ENCODE measurements at regions of chr5 and their contacts with region 1.

Region 1: DNA sequence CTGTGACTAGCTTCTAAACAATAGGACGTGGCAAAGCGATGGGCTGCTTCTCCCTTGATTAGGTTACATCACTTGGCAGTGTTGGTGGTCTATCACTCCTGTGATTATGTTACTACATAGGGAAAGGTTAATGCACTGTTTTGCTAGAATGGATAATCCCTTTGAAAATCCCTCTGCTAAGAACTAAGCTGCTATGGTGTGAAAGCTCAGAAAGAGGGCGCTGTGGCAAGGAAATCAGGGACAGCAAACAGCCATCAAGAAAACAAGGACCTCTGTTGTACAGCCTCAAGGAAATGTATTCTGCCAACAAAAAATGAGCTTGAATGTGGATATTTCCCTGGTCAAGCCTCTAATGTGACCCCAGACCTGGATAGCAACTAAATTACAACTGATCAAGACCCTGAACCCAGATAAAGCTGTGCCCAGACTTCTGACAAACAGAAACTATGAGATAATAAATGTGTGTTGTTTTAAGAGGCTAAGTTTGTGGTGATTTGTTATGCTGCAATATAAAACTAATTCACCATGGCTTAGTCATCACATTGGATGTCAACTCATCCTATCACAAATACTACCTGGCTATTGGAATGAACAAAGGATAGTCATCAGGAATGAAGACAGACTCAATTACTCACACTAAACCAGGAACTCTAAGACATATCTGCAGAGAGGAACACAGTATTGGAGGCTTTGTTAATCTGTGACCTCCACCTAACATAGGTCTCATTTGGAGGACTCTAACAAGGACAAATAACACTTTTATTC is 1215.9 kb downstream of the EFNA5 start:
- DNase-seq: no peak
- ATAC-seq: peak; percentile 74
- H3K4me3 ChIP-seq: no peak overlapping the region
- H3K27ac ChIP-seq: no peak overlapping the region
- H3K4me1 ChIP-seq: no peaks in the 10 kb centered on the region
- H3K27me3 ChIP-seq: no peaks in the 10 kb centered on the region
- CTCF ChIP-seq: peak in 2 of 3 experiments; percentile 33 to 47; a peak in 1 of 6 replicates
- EP300 ChIP-seq: no peak
- POLR2A ChIP-seq: no peak
- RAD21 ChIP-seq: peak; percentile 25; the same call in 1 of the 2 replicates

Region 2: DNA sequence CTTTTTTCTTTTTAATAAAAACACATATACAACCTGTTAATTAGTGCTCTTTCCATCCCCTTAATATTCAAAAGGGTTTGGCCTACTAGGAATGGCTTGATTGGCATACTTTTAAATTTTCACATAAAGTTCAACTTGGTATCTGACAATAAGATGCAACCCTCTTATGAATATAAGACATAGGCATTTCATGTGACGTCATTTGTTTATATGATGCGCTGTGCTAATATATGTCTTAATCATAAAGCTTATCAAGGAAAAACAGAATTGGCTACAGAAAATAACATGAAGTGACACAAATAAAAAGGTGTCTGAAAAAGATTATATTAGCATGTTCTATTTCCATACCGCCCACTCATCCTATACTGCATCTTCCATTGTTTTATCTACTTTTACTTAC is 426.5 kb before region 1 on chr5:
- CTCF ChIA-PET with region 1: no interaction called
- POLR2A ChIA-PET with region 1: no interaction called
- RAD21 ChIA-PET with region 1: no interaction called
- SMC1A ChIA-PET with region 1: no interaction called
- in situ Hi-C with region 1: no loop called
- intact Hi-C with region 1: no loop called
- DNase-seq: no peak
- ATAC-seq: no peak
- H3K4me3 ChIP-seq: no peak overlapping the region
- H3K27ac ChIP-seq: no peak overlapping the region
- H3K4me1 ChIP-seq: no peaks in the 10 kb centered on the region
- H3K27me3 ChIP-seq: no peaks in the 10 kb centered on the region
- CTCF ChIP-seq: no peak
- EP300 ChIP-seq: no peak
- POLR2A ChIP-seq: no peak
- RAD21 ChIP-seq: no peak

Region 3: DNA sequence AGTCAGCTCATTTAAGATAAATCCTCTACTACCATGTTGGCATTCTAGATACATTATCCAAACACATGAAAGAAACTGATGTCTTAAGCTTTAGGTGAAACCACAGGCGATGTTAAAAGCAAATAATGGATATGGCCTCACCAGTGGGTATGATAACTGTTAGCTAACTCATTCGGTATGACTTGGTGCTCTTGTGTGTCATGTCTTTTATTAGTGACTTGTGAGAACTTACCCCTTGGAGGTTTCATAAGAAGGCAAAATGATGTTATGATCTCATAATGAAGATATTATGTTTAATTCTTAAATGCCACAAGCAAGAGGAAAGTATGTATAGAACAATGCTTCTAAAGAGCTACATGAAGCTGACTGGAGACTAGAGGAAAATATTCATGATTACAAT is 11.1 kb before region 1 on chr5:
- CTCF ChIA-PET with region 1: interaction called, 10 read pairs
- POLR2A ChIA-PET with region 1: no interaction called
- RAD21 ChIA-PET with region 1: no interaction called
- SMC1A ChIA-PET with region 1: no interaction called
- in situ Hi-C with region 1: no loop called
- intact Hi-C with region 1: no loop called
- DNase-seq: no peak
- ATAC-seq: no peak
- H3K4me3 ChIP-seq: no peak overlapping the region
- H3K27ac ChIP-seq: no peak overlapping the region
- H3K4me1 ChIP-seq: no peaks in the 10 kb centered on the region
- H3K27me3 ChIP-seq: no peaks in the 10 kb centered on the region
- CTCF ChIP-seq: no peak
- EP300 ChIP-seq: no peak
- POLR2A ChIP-seq: no peak
- RAD21 ChIP-seq: no peak

Region 4: GRCh38 chr5:106699198-106699597 is 244.4 kb after region 1 on chr5:
- CTCF ChIA-PET with region 1: interaction called, 10 read pairs
- POLR2A ChIA-PET with region 1: no interaction called
- RAD21 ChIA-PET with region 1: interaction called, 6 read pairs
- SMC1A ChIA-PET with region 1: interaction called, 5 read pairs
- in situ Hi-C with region 1: no loop called
- intact Hi-C with region 1: no loop called
- DNase-seq: no peak
- ATAC-seq: peak; percentile 78
- H3K4me3 ChIP-seq: no peak overlapping the region
- H3K27ac ChIP-seq: no peak overlapping the region
- H3K4me1 ChIP-seq: no peaks in the 10 kb centered on the region
- H3K27me3 ChIP-seq: no peaks in the 10 kb centered on the region
- CTCF ChIP-seq: peak; percentile 18 to 45 (median 42); a peak in 4 of 6 replicates
- EP300 ChIP-seq: no peak
- POLR2A ChIP-seq: no peak
- RAD21 ChIP-seq: peak; percentile 51

Region 5: GRCh38 chr5:106875591-106876297 is 420.9 kb after region 1 on chr5:
- CTCF ChIA-PET with region 1: interaction called, 5 read pairs
- POLR2A ChIA-PET with region 1: no interaction called
- RAD21 ChIA-PET with region 1: interaction called, 3 read pairs
- SMC1A ChIA-PET with region 1: interaction called, 3 read pairs
- in situ Hi-C with region 1: no loop called
- intact Hi-C with region 1: loop called (anchors 10 kb)
- DNase-seq: no peak
- ATAC-seq: peak; percentile 94
- H3K4me3 ChIP-seq: no peak overlapping the region
- H3K27ac ChIP-seq: no peak overlapping the region
- H3K4me1 ChIP-seq: no peaks in the 10 kb centered on the region
- H3K27me3 ChIP-seq: no peaks in the 10 kb centered on the region
- CTCF ChIP-seq: peak; percentile 59 to 69 (median 61)
- EP300 ChIP-seq: no peak
- POLR2A ChIP-seq: no peak
- RAD21 ChIP-seq: peak; percentile 77